CD8-positive, alpha-beta memory T cell (primary cell): ENCODE measurements at regions of chr2 and their contacts with region 1.

Region 1: DNA sequence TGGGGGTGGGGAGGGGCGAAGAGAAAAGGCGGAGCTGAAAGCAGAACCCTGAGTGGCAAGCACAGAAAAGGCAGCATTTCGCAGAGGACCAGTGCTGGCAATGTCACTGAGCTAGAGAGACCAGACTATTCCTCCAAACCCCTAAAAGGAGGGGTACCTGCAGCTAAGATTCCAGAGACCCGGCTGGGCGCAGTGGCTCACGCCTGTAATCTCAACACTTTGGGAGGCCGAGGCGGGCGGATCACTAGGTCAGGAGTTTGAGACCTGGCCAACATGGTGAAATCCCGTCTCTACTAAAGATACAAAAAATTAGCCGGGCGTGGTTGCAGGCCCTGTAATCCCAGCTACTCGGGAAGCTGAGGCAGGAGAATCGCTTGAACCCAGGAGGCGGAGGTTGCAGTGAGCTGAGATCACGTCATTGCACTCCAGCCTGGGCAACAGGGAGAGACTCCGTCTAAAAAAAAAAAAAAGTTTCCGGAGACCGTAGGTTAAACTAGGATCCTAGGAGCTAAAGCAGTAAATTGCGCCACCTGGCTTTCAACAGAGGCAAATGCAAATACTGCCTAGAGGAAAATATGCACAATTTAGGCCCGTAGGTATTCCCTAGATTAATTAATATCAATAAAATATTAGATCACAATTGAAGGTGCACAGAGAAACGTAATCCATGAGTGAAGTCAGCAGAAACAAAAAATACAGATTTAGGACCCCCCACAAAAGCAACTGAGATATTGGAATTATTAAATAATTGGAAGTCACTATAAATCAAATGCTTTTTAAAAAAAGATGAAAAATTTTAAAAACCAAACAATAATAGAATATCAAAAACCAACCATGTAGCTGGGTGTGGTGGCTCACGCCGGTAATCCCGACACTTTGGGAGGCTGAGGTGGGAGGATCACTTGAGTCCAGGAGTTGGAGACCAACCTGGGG is 4.9 kb downstream of the UCN start:
- DNase-seq: peak in 3 of 5 donors; percentile 16 to 55 (median 43)
- H3K4me3 ChIP-seq: peak overlapping the region; percentile 56
- H3K4me3 Mint-ChIP-seq: peak overlapping the region; percentile 56 to 88 (median 69)
- H3K27ac ChIP-seq: no peak overlapping the region
- H3K27ac Mint-ChIP-seq: peak overlapping the region in 5 of 8 donors; percentile 44 to 71 (median 66)
- H3K4me1 ChIP-seq: no peaks in the 10 kb centered on the region
- H3K4me1 Mint-ChIP-seq: peaks cover 0 to 15% (median 4%) of the 10 kb centered on the region in 3 donors
- H3K27me3 ChIP-seq: peaks cover 7% of the 10 kb centered on the region
- H3K27me3 Mint-ChIP-seq: peaks cover 17 to 25% of the 10 kb centered on the region in 2 donors

Region 2: GRCh38 chr2:26959331-26959730 is 344.0 kb before region 1 on chr2:
- CTCF ChIA-PET with region 1: interaction called, 32 read pairs
- POLR2A ChIA-PET with region 1: no interaction called
- DNase-seq: no peak
- H3K4me3 ChIP-seq: no peak overlapping the region
- H3K4me3 Mint-ChIP-seq: no peak overlapping the region
- H3K27ac ChIP-seq: no peak overlapping the region
- H3K27ac Mint-ChIP-seq: no peak overlapping the region
- H3K4me1 ChIP-seq: no peaks in the 10 kb centered on the region
- H3K4me1 Mint-ChIP-seq: peaks cover 0 to 3% (median 0%) of the 10 kb centered on the region in 3 donors
- H3K27me3 ChIP-seq: peaks cover 4% of the 10 kb centered on the region
- H3K27me3 Mint-ChIP-seq: peaks cover 30 to 55% of the 10 kb centered on the region in 2 donors

Region 3: DNA sequence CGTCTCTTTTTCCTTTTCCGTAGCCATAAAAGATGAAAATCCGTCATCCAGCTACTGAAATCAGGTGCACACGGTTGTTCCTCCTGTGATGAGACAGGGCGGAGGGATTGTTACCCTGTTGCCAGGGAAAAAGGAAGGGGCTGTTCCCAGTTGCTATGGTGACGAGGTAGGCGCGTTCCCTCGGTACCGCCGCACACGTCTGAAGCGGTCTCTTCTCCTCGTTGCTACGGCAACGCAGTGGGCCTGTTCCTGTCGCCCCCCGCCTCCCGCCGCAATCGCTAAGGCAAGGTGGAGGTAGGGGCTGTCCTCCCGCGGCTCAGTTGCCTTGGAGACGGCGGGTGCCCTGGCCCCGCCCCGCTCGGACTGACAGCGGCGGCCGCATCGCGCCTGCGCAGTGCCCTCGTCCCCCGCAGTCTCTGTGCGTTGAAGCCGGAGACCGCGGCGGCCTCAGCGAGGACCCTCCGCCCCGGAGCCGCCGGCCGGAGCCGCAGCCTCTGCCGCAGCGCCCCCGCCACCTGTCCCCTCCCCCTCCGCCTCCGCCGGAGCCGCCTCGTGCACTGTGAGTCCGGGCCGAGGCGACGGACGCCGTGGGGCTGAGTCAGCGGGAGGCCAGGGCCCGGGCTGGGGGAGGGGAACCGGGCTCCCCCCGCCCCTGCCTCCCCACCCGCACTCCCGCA is 333.0 kb before region 1 on chr2 and contains the start of gene MAPRE3:
- CTCF ChIA-PET with region 1: no interaction called
- POLR2A ChIA-PET with region 1: no interaction called
- DNase-seq: peak; percentile 76 to 94 (median 84)
- H3K4me3 ChIP-seq: peak within 1 kb of the TSS; percentile 70
- H3K4me3 Mint-ChIP-seq: peak within 1 kb of the TSS; percentile 78 to 89 (median 84)
- H3K27ac ChIP-seq: peak within 1 kb of the TSS; percentile 60
- H3K27ac Mint-ChIP-seq: peak within 1 kb of the TSS; percentile 79 to 95 (median 88)
- H3K4me1 ChIP-seq: peaks cover 7% of the 10 kb centered on the region
- H3K4me1 Mint-ChIP-seq: peaks cover 18 to 27% (median 21%) of the 10 kb centered on the region in 3 donors
- H3K27me3 ChIP-seq: peaks cover 8% of the 10 kb centered on the region
- H3K27me3 Mint-ChIP-seq: peaks cover 20 to 24% of the 10 kb centered on the region in 2 donors
- total RNA-seq, gene MAPRE3: 2.4 to 3.0 TPM

Region 4: GRCh38 chr2:27281855-27282559 is 21.4 kb before region 1 on chr2 and contains the start of gene TRIM54:
- CTCF ChIA-PET with region 1: interaction called, 16 read pairs
- POLR2A ChIA-PET with region 1: interaction called, 3 read pairs
- DNase-seq: no peak
- H3K4me3 ChIP-seq: no peak within 1 kb of the TSS
- H3K4me3 Mint-ChIP-seq: no peak within 1 kb of the TSS
- H3K27ac ChIP-seq: no peak within 1 kb of the TSS
- H3K27ac Mint-ChIP-seq: peak within 1 kb of the TSS in 1 of 8 donors; percentile 36
- H3K4me1 ChIP-seq: no peaks in the 10 kb centered on the region
- H3K4me1 Mint-ChIP-seq: peaks cover 2 to 5% (median 4%) of the 10 kb centered on the region in 3 donors
- H3K27me3 ChIP-seq: no peaks in the 10 kb centered on the region
- H3K27me3 Mint-ChIP-seq: peaks cover 20 to 65% of the 10 kb centered on the region in 2 donors
- total RNA-seq, gene TRIM54: 0.22 TPM

Region 5: DNA sequence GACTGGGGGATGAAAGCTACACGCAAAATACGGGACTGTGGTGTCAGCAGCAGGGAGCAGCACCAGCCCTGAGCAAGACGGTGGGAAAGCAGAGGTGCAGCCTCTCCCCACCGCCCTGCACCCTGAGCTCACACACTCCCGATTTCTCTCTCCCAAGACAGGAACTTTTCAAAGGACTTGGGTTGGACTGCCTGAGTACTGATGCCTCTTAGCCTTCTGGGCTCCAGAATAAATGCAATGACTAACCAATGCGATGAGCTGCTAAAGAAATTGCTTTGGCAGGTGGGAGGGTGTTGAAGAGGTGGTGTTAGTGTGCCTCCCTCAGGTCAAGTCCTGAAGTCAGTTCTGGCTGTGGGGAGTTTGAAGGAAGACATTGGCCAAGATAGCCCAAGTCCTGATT is 11.5 kb before region 1 on chr2:
- CTCF ChIA-PET with region 1: interaction called, 19 read pairs
- POLR2A ChIA-PET with region 1: no interaction called
- DNase-seq: no peak
- H3K4me3 ChIP-seq: no peak overlapping the region
- H3K4me3 Mint-ChIP-seq: no peak overlapping the region
- H3K27ac ChIP-seq: no peak overlapping the region
- H3K27ac Mint-ChIP-seq: no peak overlapping the region
- H3K4me1 ChIP-seq: no peaks in the 10 kb centered on the region
- H3K4me1 Mint-ChIP-seq: no peaks in the 10 kb centered on the region
- H3K27me3 ChIP-seq: no peaks in the 10 kb centered on the region
- H3K27me3 Mint-ChIP-seq: peaks cover 6 to 44% of the 10 kb centered on the region in 2 donors

Region 6: GRCh38 chr2:27316655-27317411 is 13.5 kb after region 1 on chr2:
- CTCF ChIA-PET with region 1: interaction called, 27 read pairs
- POLR2A ChIA-PET with region 1: no interaction called
- DNase-seq: no peak
- H3K4me3 ChIP-seq: no peak overlapping the region
- H3K4me3 Mint-ChIP-seq: no peak overlapping the region
- H3K27ac ChIP-seq: no peak overlapping the region
- H3K27ac Mint-ChIP-seq: no peak overlapping the region
- H3K4me1 ChIP-seq: peaks cover 2% of the 10 kb centered on the region
- H3K4me1 Mint-ChIP-seq: peaks cover 4 to 11% (median 6%) of the 10 kb centered on the region in 3 donors
- H3K27me3 ChIP-seq: no peaks in the 10 kb centered on the region
- H3K27me3 Mint-ChIP-seq: no peaks in the 10 kb centered on the region

Region 7: DNA sequence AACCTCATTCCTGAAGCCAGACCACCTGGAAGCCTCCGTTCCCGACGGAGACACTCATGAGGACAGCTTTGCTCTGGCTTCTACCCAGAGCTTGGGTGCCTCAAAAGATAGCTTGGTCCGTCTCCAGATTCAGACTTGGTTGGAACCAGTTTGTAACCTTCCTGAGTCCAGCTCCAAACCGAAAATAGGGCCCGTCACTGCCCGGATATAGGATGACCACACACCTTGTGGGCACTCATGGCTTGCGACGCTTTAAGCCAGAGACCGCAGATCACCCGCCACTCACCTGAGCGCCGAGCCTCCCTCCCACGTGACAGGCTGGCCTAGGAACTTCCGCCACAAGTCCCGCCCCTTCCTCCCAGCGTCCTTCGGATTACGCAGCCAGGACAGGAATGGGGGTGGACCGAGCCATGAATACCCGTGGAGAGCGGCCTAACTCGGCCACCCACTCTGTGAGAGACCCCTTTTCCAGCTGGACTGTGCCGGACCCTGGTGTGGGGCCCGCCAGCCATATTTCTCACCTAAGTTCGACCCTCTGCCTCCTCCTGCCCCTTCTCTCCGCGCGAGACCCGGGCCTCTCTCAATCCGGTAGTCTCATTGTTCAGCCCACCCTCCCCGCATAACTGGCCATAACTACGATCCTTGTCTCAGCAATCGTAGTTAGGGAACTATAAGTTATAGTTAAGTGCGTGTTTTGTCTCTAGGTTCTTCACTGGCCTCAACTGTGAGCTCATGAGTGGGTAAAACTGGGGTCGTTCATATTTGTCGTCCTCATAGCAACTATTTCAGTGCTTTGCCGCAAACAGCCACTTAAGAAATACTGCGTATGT is 19.6 kb after region 1 on chr2 and contains the start of gene MPV17:
- CTCF ChIA-PET with region 1: interaction called, 27 read pairs
- POLR2A ChIA-PET with region 1: no interaction called
- DNase-seq: peak; percentile 78 to 91 (median 80)
- H3K4me3 ChIP-seq: peak within 1 kb of the TSS; percentile 87
- H3K4me3 Mint-ChIP-seq: peak within 1 kb of the TSS; percentile 91 to 99 (median 97)
- H3K27ac ChIP-seq: peak within 1 kb of the TSS; percentile 89
- H3K27ac Mint-ChIP-seq: peak within 1 kb of the TSS; percentile 94 to 100 (median 99)
- H3K4me1 ChIP-seq: peaks cover 15% of the 10 kb centered on the region
- H3K4me1 Mint-ChIP-seq: peaks cover 19 to 36% (median 21%) of the 10 kb centered on the region in 3 donors
- H3K27me3 ChIP-seq: no peaks in the 10 kb centered on the region
- H3K27me3 Mint-ChIP-seq: no peaks in the 10 kb centered on the region
- total RNA-seq, gene MPV17: 85.9 to 86.4 TPM

Region 8: GRCh38 chr2:27370026-27370815 is 66.9 kb after region 1 on chr2 and contains the starts of genes EIF2B4 and SNX17:
- CTCF ChIA-PET with region 1: interaction called, 10 read pairs
- POLR2A ChIA-PET with region 1: no interaction called
- DNase-seq: peak; percentile 98 to 100 (median 99)
- H3K4me3 ChIP-seq: peak within 1 kb of the TSS; percentile 92
- H3K4me3 Mint-ChIP-seq: peak within 1 kb of the TSS; percentile 89 to 99 (median 97)
- H3K27ac ChIP-seq: peak within 1 kb of the TSS; percentile 87
- H3K27ac Mint-ChIP-seq: peak within 1 kb of the TSS; percentile 82 to 100 (median 98)
- H3K4me1 ChIP-seq: peaks cover 35% of the 10 kb centered on the region
- H3K4me1 Mint-ChIP-seq: peaks cover 42 to 50% (median 44%) of the 10 kb centered on the region in 3 donors
- H3K27me3 ChIP-seq: no peaks in the 10 kb centered on the region
- H3K27me3 Mint-ChIP-seq: peaks cover 0 to 2% of the 10 kb centered on the region in 2 donors
- total RNA-seq, gene EIF2B4: 46.6 to 47.1 TPM
- total RNA-seq, gene SNX17: 122 to 130 TPM